Activated CD8-positive, alpha-beta T cell treated with anti-CD3 and anti-CD28 coated beads for 36 hours (primary cell): ENCODE measurements at regions of chr7 and their contacts with region 1.

Region 1: DNA sequence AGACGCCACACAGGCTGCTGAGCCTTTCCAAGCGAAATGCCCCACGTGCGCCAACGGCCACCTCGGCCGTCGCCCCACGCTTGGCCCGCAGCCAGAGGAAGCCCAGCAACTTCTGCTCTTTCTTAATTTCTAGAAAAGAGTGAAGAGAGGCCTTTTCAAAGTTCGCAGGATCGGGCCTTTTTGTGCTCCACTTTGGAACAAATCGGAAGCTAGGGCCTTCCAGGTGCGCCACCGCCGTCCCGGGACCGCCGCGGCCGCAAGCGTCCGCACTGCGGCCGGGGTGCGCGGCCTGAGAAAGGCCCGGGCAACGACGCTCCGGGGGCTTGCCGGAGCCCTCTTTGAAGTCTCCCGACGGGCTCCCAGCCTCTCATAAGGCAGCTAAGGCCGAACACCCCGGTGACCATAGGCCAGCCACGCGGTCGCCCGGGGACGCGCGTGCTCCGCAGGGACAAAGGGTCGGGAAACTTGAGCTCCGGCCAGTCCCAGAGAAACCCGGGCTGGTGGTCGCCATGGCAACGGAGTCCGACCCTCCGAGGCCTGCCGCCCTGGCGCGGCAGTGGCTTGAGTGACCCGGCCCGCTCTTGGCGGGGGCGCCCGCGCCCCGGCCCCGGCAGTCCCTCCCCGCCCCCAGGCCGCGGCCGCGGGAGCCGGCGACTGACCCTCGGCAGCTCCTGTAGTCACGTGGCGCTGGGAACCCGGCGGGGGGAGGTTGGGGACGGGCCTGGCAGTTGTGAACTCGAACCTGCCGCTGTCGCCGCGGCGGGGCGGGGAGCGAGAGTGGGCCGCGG is at the start of gene REPIN1:
- DNase-seq: peak; percentile 85
- ATAC-seq: peak; percentile 57
- H3K4me3 Mint-ChIP-seq: peak within 1 kb of the TSS; percentile 97
- H3K27ac Mint-ChIP-seq: peak within 1 kb of the TSS; percentile 97
- H3K4me1 Mint-ChIP-seq: peaks cover 56% of the 10 kb centered on the region
- H3K27me3 Mint-ChIP-seq: no peaks in the 10 kb centered on the region
- CTCF ChIP-seq: no peak
- total RNA-seq, gene REPIN1: 56.0 to 59.2 TPM

Region 2: GRCh38 chr7:150322833-150323681 is 45.2 kb before region 1 on chr7 and contains the starts of genes ACTR3C and LRRC61:
- CTCF ChIA-PET with region 1: no interaction called
- POLR2A ChIA-PET with region 1: interaction called, 19 read pairs
- intact Hi-C with region 1: no loop called
- DNase-seq: peak; percentile 81
- ATAC-seq: peak; percentile 53
- H3K4me3 Mint-ChIP-seq: peak within 1 kb of the TSS; percentile 95
- H3K27ac Mint-ChIP-seq: peak within 1 kb of the TSS; percentile 100
- H3K4me1 Mint-ChIP-seq: peaks cover 48% of the 10 kb centered on the region
- H3K27me3 Mint-ChIP-seq: no peaks in the 10 kb centered on the region
- CTCF ChIP-seq: peak; percentile 43
- total RNA-seq, gene ACTR3C: 2.6 to 2.9 TPM
- total RNA-seq, gene LRRC61: 21.8 to 21.9 TPM

Region 3: GRCh38 chr7:150356265-150356897 is 11.9 kb before region 1 on chr7:
- CTCF ChIA-PET with region 1: interaction called, 9 read pairs
- POLR2A ChIA-PET with region 1: interaction called, 10 read pairs
- intact Hi-C with region 1: no loop called
- DNase-seq: peak; percentile 38
- ATAC-seq: peak; percentile 17
- H3K4me3 Mint-ChIP-seq: peak overlapping the region; percentile 2
- H3K27ac Mint-ChIP-seq: no peak overlapping the region
- H3K4me1 Mint-ChIP-seq: peaks cover 38% of the 10 kb centered on the region
- H3K27me3 Mint-ChIP-seq: no peaks in the 10 kb centered on the region
- CTCF ChIP-seq: peak; percentile 89

Region 4: GRCh38 chr7:150378853-150379440 is 10.7 kb after region 1 on chr7 and contains the start of gene ZNF775:
- CTCF ChIA-PET with region 1: interaction called, 7 read pairs
- POLR2A ChIA-PET with region 1: interaction called, 26 read pairs
- intact Hi-C with region 1: no loop called
- DNase-seq: peak; percentile 94
- ATAC-seq: peak; percentile 97
- H3K4me3 Mint-ChIP-seq: peak within 1 kb of the TSS; percentile 88
- H3K27ac Mint-ChIP-seq: peak within 1 kb of the TSS; percentile 70
- H3K4me1 Mint-ChIP-seq: peaks cover 47% of the 10 kb centered on the region
- H3K27me3 Mint-ChIP-seq: no peaks in the 10 kb centered on the region
- CTCF ChIP-seq: no peak
- total RNA-seq, gene ZNF775: 4.7 to 4.9 TPM

Region 5: GRCh38 chr7:150389532-150389816 is 21.2 kb after region 1 on chr7:
- CTCF ChIA-PET with region 1: no interaction called
- POLR2A ChIA-PET with region 1: no interaction called
- intact Hi-C with region 1: no loop called
- DNase-seq: no peak
- ATAC-seq: peak; percentile 45
- H3K4me3 Mint-ChIP-seq: no peak overlapping the region
- H3K27ac Mint-ChIP-seq: no peak overlapping the region
- H3K4me1 Mint-ChIP-seq: no peaks in the 10 kb centered on the region
- H3K27me3 Mint-ChIP-seq: no peaks in the 10 kb centered on the region
- CTCF ChIP-seq: no peak